PC-9 (cell line): ENCODE measurements at regions of chr5 and their contacts with region 1.

Region 1: DNA sequence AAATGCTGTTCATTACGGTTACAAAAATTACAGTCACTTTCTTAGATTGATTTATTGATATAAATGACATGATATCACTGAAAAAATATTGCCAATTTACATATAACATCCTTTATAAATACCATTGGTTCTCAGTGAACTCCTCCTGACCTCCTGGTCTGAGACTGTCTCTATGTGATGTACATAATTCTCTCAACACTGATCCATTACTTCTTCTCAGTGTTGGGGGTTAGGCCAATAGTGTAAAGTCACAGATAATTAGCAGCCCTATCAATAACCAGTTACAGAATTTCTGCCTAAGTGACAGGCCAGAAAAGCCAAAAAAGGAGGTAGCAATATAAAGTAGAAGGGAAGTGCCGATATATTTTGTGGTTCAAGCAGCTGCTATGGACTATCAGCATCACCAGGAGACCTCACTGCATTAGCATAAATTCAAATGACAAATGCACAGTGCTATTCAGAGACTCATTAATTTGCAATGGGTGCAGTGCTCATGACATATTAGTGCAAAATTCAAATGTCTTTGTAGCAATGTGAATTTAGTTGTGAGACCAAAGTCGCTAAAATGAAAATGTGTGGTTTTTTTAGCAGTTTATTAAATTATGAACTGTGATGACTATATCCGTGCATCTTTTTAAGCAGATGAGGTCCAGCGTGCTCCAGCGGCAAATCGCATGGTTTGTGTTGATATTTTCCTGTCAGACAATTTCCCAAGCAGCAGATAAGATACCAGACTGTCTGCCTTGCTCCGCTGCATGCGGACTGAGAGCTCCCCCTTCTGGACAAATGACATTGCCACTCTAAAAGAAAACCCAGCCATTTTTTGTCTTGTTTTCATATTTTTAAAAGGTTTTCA is 144.6 kb downstream of the CETN3 start:
- DNase-seq: peak in 1 of 2 experiments; percentile 55
- H3K4me3 ChIP-seq: no peak overlapping the region
- H3K27ac ChIP-seq: no peak overlapping the region
- H3K4me1 ChIP-seq: no peaks in the 10 kb centered on the region
- H3K27me3 ChIP-seq: no peaks in the 10 kb centered on the region
- CTCF ChIP-seq: peak; percentile 93

Region 2: GRCh38 chr5:89729623-89730301 is 535.2 kb before region 1 on chr5:
- CTCF ChIA-PET with region 1: no interaction called
- POLR2A ChIA-PET with region 1: no interaction called
- intact Hi-C with region 1: loop called (anchors 10 kb)
- DNase-seq: peak; percentile 9 to 34
- H3K4me3 ChIP-seq: no peak overlapping the region
- H3K27ac ChIP-seq: no peak overlapping the region
- H3K4me1 ChIP-seq: no peaks in the 10 kb centered on the region
- H3K27me3 ChIP-seq: no peaks in the 10 kb centered on the region
- CTCF ChIP-seq: peak; percentile 41; the same call in 1 of the 2 replicates

Region 3: GRCh38 chr5:90184764-90185163 is 80.2 kb before region 1 on chr5:
- CTCF ChIA-PET with region 1: no interaction called
- POLR2A ChIA-PET with region 1: no interaction called
- intact Hi-C with region 1: loop called (anchors 10 kb)
- DNase-seq: no peak
- H3K4me3 ChIP-seq: no peak overlapping the region
- H3K27ac ChIP-seq: no peak overlapping the region
- H3K4me1 ChIP-seq: 0 out of 2 replicates have a peak, but pooled peaks cover 8% of the 10 kb centered on the region
- H3K27me3 ChIP-seq: no peaks in the 10 kb centered on the region
- CTCF ChIP-seq: no peak

Region 4: DNA sequence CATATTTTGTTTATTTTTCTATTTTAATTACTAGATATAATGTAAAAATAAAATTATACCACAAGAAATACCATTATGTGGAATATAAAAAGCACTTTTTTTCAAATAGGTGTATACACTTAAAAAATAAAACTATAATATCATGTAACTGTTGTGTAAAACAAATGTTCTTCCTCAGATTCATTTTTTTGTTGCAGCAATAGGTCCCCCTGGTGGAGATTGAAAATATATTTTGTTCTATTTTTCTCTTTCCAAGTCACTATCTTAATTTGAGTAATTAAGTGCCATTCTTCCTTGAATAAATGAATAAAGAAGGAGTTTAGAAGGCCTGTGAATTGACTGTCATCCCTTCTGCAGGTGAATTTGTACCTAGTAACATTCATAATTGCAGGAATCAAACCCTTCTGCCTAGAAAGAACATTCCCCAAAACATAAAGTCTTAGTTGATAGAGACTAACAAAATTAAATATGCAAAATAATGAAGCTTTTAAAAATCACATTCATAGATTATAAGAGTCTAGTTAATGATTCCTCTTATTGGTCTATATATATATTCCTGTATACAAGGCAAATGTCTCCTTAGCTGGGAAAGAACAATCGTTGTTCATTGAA is 121.3 kb after region 1 on chr5:
- CTCF ChIA-PET with region 1: no interaction called
- POLR2A ChIA-PET with region 1: no interaction called
- intact Hi-C with region 1: loop called (anchors 10 kb)
- DNase-seq: peak in 1 of 2 experiments; percentile 37
- H3K4me3 ChIP-seq: no peak overlapping the region
- H3K27ac ChIP-seq: no peak overlapping the region
- H3K4me1 ChIP-seq: peaks cover 5% of the 10 kb centered on the region; the same call in 1 of the 2 replicates
- H3K27me3 ChIP-seq: no peaks in the 10 kb centered on the region
- CTCF ChIP-seq: peak; percentile 72

Region 5: DNA sequence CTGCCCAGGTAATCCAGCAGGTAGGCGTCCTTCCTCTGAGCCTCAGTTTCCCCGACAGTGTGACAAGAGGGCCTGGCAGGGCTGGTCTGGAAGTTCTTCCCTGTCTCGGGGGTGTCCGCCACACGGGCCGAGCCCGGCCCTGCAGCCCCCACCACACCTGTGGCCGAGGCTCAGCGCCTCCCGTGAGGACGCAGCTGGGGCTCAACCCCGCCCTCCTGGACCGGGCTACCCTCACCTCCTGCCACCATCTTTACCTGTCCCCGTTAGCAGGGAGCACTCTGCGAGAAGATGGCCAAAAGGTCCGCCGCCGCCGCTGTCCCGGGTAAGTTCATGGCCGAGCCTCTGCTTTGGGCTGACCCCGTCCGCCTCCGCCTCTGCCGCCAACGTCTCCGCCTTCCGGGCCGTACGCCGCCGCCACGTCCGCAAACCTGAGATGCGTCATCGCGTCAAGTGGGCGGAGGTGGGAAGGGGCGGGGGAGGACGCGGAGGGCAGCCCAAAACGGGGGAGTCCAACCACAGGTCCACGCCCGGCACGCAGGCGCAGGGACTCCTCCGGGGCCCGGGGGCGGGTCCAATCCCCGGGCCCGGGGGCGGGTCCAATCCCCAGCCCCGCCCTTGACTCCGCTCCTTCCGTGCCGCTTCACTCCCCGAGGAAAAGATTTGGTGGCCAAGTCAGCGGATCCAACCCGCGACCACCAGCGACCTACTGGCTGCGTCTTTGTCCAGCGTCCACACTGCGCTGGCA is 264.4 kb after region 1 on chr5 and contains the start of gene LYSMD3:
- CTCF ChIA-PET with region 1: no interaction called
- POLR2A ChIA-PET with region 1: no interaction called
- intact Hi-C with region 1: loop called (anchors 2 kb)
- DNase-seq: peak; percentile 91 to 95
- H3K4me3 ChIP-seq: peak within 1 kb of the TSS; percentile 82
- H3K27ac ChIP-seq: peak within 1 kb of the TSS; percentile 54
- H3K4me1 ChIP-seq: peaks cover 15% of the 10 kb centered on the region
- H3K27me3 ChIP-seq: peaks cover 4% of the 10 kb centered on the region; the same call in 1 of the 2 replicates
- CTCF ChIP-seq: no peak
- total RNA-seq, gene LYSMD3: 4.6 and 10.6 TPM in 2 replicates

Region 6: DNA sequence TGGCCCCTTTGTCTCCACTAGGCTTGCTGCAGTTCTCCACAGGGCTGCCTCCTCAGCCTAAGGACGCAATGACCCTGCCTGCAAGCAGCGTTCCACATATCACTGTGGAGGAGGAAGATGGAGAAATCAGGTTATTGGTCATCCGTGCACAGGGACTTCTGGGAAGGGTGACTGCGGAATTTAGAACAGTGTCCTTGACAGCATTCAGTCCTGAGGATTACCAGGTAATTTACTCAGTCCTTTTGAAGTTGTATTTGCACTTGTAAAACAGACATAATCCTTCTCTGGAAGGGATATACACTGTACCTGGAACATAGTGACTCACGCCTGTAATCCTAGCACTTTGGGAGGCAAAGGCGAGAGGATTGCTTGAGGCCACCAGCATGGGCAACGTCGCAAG is 410.3 kb after region 1 on chr5:
- CTCF ChIA-PET with region 1: interaction called, 14 read pairs
- POLR2A ChIA-PET with region 1: no interaction called
- intact Hi-C with region 1: no loop called
- DNase-seq: no peak
- H3K4me3 ChIP-seq: no peak overlapping the region
- H3K27ac ChIP-seq: no peak overlapping the region
- H3K4me1 ChIP-seq: no peaks in the 10 kb centered on the region
- H3K27me3 ChIP-seq: no peaks in the 10 kb centered on the region
- CTCF ChIP-seq: no peak

Region 7: DNA sequence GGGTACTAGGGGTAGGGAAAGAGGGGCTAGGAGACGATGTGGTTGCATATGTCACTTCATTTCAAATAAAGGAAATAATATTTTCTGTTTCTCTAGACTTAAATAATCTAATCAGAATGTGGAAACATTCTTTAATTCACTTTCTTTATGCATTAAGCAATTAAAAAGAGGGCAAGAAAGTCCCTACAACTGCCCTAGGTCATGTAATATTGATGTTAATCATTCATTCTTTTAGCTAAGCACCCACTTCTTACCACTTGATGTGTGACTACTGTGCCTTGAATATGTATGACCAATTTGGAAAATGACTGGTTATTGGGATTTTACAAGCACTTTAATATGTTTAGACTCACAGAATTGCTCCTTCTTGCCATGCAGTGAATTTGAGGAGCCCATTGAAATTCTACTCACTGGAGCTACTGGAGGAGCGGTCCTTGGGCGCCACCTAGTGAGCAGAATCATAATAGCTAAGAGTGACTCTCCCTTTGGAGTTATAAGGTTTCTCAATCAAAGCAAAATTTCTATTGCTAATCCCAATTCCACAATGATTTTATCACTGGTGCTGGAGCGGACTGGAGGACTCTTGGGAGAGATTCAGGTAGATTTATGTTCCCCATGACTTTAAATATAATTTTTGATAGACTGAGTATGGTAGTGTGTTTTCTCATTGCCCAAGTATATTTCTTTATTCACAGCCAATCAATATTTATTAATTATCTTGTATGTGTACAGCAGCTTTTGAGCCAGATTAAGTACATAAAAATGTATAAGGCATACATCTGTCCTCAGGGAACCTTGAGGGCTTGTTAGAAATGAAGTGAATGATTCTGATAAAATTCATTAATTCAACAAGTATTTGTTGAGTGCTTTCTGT is 518.8 kb after region 1 on chr5:
- CTCF ChIA-PET with region 1: no interaction called
- POLR2A ChIA-PET with region 1: no interaction called
- intact Hi-C with region 1: loop called (anchors 2 kb)
- DNase-seq: peak in 1 of 2 experiments; percentile 61
- H3K4me3 ChIP-seq: no peak overlapping the region
- H3K27ac ChIP-seq: no peak overlapping the region
- H3K4me1 ChIP-seq: no peaks in the 10 kb centered on the region
- H3K27me3 ChIP-seq: no peaks in the 10 kb centered on the region
- CTCF ChIP-seq: peak; percentile 94